Activated CD8-positive, alpha-beta T cell treated with anti-CD3 and anti-CD28 coated beads, Interleukin-2, amount 10 ng/mL, durations not matched to agents 7 days and 5 days (primary cell): ENCODE measurements at regions of chr3 and their contacts with region 1.

Region 1: GRCh38 chr3:108090701-108091451 is at the start of gene CD47:
- DNase-seq: peak; percentile 97
- ATAC-seq: peak; percentile 83
- H3K4me3 Mint-ChIP-seq: no peak within 1 kb of the TSS
- H3K27ac Mint-ChIP-seq: peak within 1 kb of the TSS; percentile 99
- H3K4me1 Mint-ChIP-seq: peaks cover 24% of the 10 kb centered on the region
- H3K27me3 Mint-ChIP-seq: no peaks in the 10 kb centered on the region
- total RNA-seq, gene CD47: 136 to 137 TPM

Region 2: DNA sequence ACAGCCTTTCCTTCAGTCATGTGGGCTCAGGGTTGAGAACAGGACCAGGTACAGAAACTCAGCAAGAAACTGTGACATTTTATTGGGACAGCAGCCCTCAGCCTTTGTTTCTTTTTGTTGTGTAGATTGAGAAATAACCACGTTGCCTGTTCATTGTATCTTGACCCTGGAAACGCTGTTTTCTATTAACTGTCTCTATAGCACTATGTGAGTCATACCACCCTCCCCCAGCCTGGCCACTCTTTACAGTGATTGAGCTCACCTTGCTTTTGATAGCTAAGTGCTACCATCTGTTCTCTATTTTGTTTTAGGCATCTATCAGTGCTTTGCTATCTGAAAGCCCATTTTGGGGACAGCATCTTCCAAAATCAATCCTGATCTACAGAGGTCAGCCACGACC is 127.9 kb before region 1 on chr3:
- CTCF ChIA-PET with region 1: no interaction called
- POLR2A ChIA-PET with region 1: no interaction called
- DNase-seq: no peak
- ATAC-seq: no peak
- H3K4me3 Mint-ChIP-seq: no peak overlapping the region
- H3K27ac Mint-ChIP-seq: no peak overlapping the region
- H3K4me1 Mint-ChIP-seq: peaks cover 4% of the 10 kb centered on the region
- H3K27me3 Mint-ChIP-seq: no peaks in the 10 kb centered on the region

Region 3: DNA sequence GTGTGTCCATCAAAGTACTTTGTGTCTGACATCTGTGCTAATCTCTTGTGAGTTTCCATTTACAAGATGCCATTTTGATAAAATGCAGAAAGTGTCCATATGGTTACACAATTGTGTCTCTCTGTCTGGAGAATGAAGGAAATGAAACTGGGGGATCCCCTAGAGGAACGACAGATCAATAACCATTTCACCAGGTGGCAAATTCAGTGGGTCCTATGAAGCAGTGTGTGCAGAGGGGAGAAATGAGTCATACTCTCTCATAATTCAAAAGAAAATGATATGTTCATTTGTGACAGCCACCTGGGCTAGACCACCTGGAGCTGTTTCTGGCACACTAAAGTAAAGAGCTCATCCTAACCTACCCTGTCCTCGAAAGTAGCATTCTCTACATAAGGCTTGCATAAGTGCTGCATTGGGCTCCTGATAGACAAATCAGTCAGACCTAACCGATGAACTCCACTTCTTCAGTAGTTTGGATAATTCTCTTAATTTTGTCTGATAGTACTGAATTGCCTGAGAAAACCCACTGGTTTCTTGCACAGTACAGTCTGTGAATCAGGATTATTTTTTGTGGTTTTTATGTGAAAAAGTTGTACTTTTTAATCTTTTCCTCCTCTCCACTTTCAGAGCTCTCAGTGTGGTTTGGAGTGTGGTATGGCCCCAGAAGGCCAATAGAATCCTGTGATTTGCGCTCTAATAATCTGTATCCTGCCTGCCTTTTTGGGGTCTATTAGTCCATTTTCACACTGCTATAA is 10.2 kb after region 1 on chr3:
- CTCF ChIA-PET with region 1: interaction called, 7 read pairs
- POLR2A ChIA-PET with region 1: interaction called, 11 read pairs
- DNase-seq: peak; percentile 56
- ATAC-seq: peak; percentile 78
- H3K4me3 Mint-ChIP-seq: peak overlapping the region; percentile 20
- H3K27ac Mint-ChIP-seq: peak overlapping the region; percentile 82
- H3K4me1 Mint-ChIP-seq: peaks cover 61% of the 10 kb centered on the region
- H3K27me3 Mint-ChIP-seq: no peaks in the 10 kb centered on the region

Region 4: DNA sequence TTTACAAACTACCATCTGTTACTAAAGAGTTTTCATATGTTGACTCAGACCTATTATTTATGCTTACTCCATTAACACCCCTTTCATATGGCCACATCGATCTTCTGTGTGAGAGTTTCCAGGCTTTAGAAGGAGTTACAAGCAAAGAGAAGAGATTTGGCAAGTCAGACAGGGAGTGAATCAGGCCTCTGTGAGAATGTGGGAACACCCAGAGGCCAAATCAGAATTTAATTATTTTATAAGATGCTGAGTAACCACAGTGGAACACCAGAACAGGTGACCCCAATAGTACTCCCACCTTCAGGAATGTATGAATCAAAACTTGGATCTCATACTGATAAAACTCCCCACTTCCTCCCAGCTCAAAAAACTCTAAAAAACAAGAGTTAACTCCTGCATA is 89.3 kb after region 1 on chr3:
- CTCF ChIA-PET with region 1: no interaction called
- POLR2A ChIA-PET with region 1: no interaction called
- DNase-seq: no peak
- ATAC-seq: no peak
- H3K4me3 Mint-ChIP-seq: no peak overlapping the region
- H3K27ac Mint-ChIP-seq: no peak overlapping the region
- H3K4me1 Mint-ChIP-seq: no peaks in the 10 kb centered on the region
- H3K27me3 Mint-ChIP-seq: no peaks in the 10 kb centered on the region